ENCODE measurements at regions of chr6 and their contacts with region 1.

Region 1: DNA sequence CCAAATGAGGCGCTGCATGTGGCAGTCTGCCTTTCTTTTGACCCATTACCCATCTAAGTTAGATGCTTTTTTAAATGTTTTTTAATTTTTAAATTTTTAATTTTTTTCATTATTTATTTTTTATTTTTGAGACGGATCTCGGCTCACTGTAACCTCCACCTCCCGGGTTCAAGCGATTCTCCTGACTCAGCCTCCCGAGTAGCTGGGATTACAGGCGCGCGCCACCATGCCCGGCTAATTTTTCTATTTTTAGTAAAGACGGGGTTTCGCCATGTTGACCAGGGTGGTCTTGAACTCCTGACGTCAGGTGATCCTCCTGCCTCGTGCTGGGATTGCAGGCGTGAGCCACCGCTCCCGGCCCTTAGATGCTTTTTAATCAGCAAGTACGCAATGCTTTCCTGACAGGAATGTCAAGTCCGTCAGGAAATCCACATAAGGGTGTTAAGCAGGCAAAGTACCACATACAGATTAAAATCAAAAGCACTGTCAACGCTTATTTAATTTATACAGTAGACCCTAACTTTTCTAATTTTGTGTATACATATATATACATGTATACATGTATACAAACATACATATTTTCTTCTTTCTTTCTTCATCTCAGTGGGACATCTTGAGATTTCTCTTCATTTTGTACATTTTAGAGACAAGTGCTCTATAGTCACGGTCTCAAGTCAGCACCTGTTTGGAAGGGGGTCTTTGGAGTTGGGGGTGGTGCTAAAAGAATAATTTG is 995 bp upstream of the GSTA4 start:
- DNase-seq: peak; percentile 67 to 85
- H3K4me3 ChIP-seq: peak overlapping the region; percentile 52
- H3K4me1 ChIP-seq: peaks cover 11% of the 10 kb centered on the region
- H3K27me3 ChIP-seq: no peaks in the 10 kb centered on the region

Region 2: DNA sequence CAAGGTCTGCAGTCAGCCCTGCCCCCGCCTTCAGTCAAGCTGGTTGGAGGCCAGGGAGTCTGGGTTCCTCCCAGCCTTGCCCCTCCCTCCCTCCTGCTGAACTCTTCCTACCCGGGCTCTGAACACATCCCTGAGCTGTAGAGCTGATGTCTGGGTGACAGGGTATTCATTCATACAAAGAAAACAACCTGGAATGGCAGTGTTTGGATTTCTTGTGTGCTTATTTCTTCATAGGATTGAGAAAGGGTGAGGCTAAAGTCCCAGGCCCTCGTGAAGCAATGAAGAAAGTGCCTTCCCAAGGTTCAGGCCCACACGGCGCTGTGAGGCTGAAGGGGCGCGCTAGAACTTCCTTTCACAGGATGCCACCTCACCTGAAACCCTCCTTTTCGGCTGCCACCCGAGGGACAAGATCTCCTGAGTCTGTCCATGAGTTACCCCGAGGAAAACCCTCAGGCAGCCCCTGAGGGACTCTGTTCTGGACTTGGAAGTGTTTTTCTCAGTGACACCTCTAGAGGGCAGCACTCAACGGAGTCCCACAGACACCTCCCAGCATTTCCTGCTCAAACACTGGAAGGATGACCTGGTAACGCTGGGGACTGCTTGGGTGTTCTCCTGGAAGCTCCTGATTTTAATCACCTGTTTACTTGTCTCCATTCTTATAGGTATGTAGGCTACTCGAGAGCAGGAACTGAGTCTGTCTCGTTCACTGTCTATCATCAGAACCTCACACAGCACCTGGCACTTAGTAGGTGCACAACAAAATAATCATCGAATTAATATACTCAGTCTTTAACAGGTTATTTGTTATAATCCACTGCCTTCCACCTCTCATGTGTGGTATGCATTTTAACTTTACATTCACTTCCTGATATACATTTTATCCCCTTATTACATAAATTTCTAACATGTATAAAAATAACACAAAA is 180.6 kb before region 1 on chr6:
- in situ Hi-C with region 1: no loop called
- DNase-seq: peak; percentile 48 to 78
- H3K4me3 ChIP-seq: no peak overlapping the region
- H3K4me1 ChIP-seq: no peaks in the 10 kb centered on the region
- H3K27me3 ChIP-seq: no peaks in the 10 kb centered on the region

Region 3: DNA sequence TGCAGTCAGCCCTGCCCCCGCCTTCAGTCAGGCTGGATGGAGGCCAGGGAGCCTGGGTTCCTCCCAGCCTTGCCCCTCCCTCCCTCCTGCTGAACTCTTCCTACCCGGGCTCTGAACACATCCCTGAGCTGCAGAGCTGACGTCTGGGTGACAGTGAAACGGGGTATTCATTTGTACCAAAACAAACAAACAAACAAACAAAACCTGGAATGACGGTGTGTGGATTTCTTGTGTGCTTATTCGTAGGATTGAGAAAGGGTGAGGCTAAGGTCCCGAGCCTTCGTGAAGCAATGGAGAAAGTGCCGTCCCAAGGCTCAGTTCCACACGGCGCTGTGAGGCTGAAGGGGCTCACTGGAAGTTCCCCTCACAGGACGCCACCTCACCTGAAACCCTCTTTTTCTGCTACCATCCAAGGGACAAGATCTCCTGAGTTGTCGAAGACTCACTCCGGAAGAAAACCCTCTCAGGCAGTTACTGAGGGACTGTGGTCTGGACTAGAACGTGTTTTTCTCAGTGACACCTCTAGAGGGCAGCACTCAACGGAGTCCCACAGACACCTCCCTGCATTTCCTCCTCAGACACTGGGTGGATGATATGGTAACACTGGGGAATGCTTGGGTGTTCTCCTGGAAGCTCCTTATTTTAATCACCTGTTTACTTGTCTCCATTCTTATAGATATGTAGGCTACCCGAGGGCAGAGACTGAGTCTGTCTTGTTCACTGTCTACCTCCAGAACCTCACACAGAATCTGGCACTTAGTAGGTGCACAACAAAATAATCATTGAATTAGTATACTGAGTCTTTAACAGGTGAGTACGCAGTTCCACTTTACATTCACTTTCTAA is 113.9 kb before region 1 on chr6:
- in situ Hi-C with region 1: loop called (anchors 10 kb)
- DNase-seq: peak; percentile 83 to 88
- H3K4me3 ChIP-seq: peak overlapping the region; percentile 35
- H3K4me1 ChIP-seq: no peaks in the 10 kb centered on the region; the same call in 1 of the 2 replicates
- H3K27me3 ChIP-seq: no peaks in the 10 kb centered on the region